MCF 10A (cell line): ENCODE measurements at regions of chr4 and their contacts with region 1.

Region 1: GRCh38 chr4:36399762-36400353 is 118.4 kb downstream of the DTHD1 start:
- DNase-seq: peak; percentile 47
- H3K4me3 Mint-ChIP-seq: no peak overlapping the region
- H3K27ac Mint-ChIP-seq: no peak overlapping the region
- H3K4me1 Mint-ChIP-seq: peaks cover under 1% of the 10 kb centered on the region
- H3K27me3 Mint-ChIP-seq: no peaks in the 10 kb centered on the region
- CTCF ChIP-seq: peak; percentile 76

Region 2: GRCh38 chr4:36235314-36235713 is 164.5 kb before region 1 on chr4:
- CTCF ChIA-PET with region 1: no interaction called
- POLR2A ChIA-PET with region 1: no interaction called
- intact Hi-C with region 1: no loop called
- DNase-seq: peak; percentile 48
- H3K4me3 Mint-ChIP-seq: no peak overlapping the region
- H3K27ac Mint-ChIP-seq: no peak overlapping the region
- H3K4me1 Mint-ChIP-seq: peaks cover 11% of the 10 kb centered on the region
- H3K27me3 Mint-ChIP-seq: no peaks in the 10 kb centered on the region
- CTCF ChIP-seq: no peak

Region 3: GRCh38 chr4:36351082-36351666 is 48.7 kb before region 1 on chr4:
- CTCF ChIA-PET with region 1: interaction called, 75 read pairs
- POLR2A ChIA-PET with region 1: interaction called, 3 read pairs
- intact Hi-C with region 1: loop called (anchors 1 kb)
- DNase-seq: peak; percentile 69
- H3K4me3 Mint-ChIP-seq: no peak overlapping the region
- H3K27ac Mint-ChIP-seq: no peak overlapping the region
- H3K4me1 Mint-ChIP-seq: peaks cover 7% of the 10 kb centered on the region
- H3K27me3 Mint-ChIP-seq: no peaks in the 10 kb centered on the region
- CTCF ChIP-seq: peak; percentile 92

Region 4: GRCh38 chr4:36363024-36363423 is 36.8 kb before region 1 on chr4:
- CTCF ChIA-PET with region 1: interaction called, 12 read pairs
- POLR2A ChIA-PET with region 1: interaction called, 3 read pairs
- intact Hi-C with region 1: no loop called
- DNase-seq: peak; percentile 46
- H3K4me3 Mint-ChIP-seq: no peak overlapping the region
- H3K27ac Mint-ChIP-seq: no peak overlapping the region
- H3K4me1 Mint-ChIP-seq: peaks cover 23% of the 10 kb centered on the region
- H3K27me3 Mint-ChIP-seq: no peaks in the 10 kb centered on the region
- CTCF ChIP-seq: no peak

Region 5: GRCh38 chr4:36374836-36375401 is 24.9 kb before region 1 on chr4:
- CTCF ChIA-PET with region 1: interaction called, 11 read pairs
- POLR2A ChIA-PET with region 1: no interaction called
- intact Hi-C with region 1: no loop called
- DNase-seq: no peak
- H3K4me3 Mint-ChIP-seq: no peak overlapping the region
- H3K27ac Mint-ChIP-seq: no peak overlapping the region
- H3K4me1 Mint-ChIP-seq: no peaks in the 10 kb centered on the region
- H3K27me3 Mint-ChIP-seq: no peaks in the 10 kb centered on the region
- CTCF ChIP-seq: no peak

Region 6: GRCh38 chr4:37216209-37216608 is 816.4 kb after region 1 on chr4:
- CTCF ChIA-PET with region 1: no interaction called
- POLR2A ChIA-PET with region 1: no interaction called
- intact Hi-C with region 1: no loop called
- DNase-seq: no peak
- H3K4me3 Mint-ChIP-seq: no peak overlapping the region
- H3K27ac Mint-ChIP-seq: no peak overlapping the region
- H3K4me1 Mint-ChIP-seq: no peaks in the 10 kb centered on the region
- H3K27me3 Mint-ChIP-seq: no peaks in the 10 kb centered on the region
- CTCF ChIP-seq: no peak

Region 7: GRCh38 chr4:37389967-37390580 is 990.2 kb after region 1 on chr4:
- CTCF ChIA-PET with region 1: interaction called, 22 read pairs
- POLR2A ChIA-PET with region 1: no interaction called
- intact Hi-C with region 1: no loop called
- DNase-seq: peak; percentile 64
- H3K4me3 Mint-ChIP-seq: no peak overlapping the region
- H3K27ac Mint-ChIP-seq: no peak overlapping the region
- H3K4me1 Mint-ChIP-seq: no peaks in the 10 kb centered on the region
- H3K27me3 Mint-ChIP-seq: no peaks in the 10 kb centered on the region
- CTCF ChIP-seq: peak; percentile 60